ENCODE measurements at regions of chr19 and their contacts with region 1.

Region 1: GRCh38 chr19:13839130-13839937 is 37.6 kb upstream of the NANOS3 start:
- DNase-seq: peak; percentile 69
- ATAC-seq: peak; percentile 66
- H3K4me3 ChIP-seq: peak overlapping the region; percentile 92
- H3K27ac ChIP-seq: peak overlapping the region; percentile 96
- H3K4me1 ChIP-seq: peaks cover 55% of the 10 kb centered on the region
- H3K27me3 ChIP-seq: no peaks in the 10 kb centered on the region
- CTCF ChIP-seq: 0 out of 6 replicates have a peak, but pooled peaks of 1 of the 3 experiments have one; percentile 8
- EP300 ChIP-seq: 0 out of 4 replicates have a peak, but pooled peaks of 1 of the 2 experiments have one; percentile 11
- POLR2A ChIP-seq: peak; percentile 89
- RAD21 ChIP-seq: no peak; the same call in 1 of the 2 replicates

Region 2: GRCh38 chr19:13181747-13182388 is 657.5 kb before region 1 on chr19:
- CTCF ChIA-PET with region 1: no interaction called
- POLR2A ChIA-PET with region 1: no interaction called
- RAD21 ChIA-PET with region 1: no interaction called
- SMC1A ChIA-PET with region 1: no interaction called
- in situ Hi-C with region 1: no loop called
- intact Hi-C with region 1: no loop called
- DNase-seq: no peak
- ATAC-seq: peak; percentile 87
- H3K4me3 ChIP-seq: no peak overlapping the region
- H3K27ac ChIP-seq: peak overlapping the region; percentile 52
- H3K4me1 ChIP-seq: peaks cover 17% of the 10 kb centered on the region
- H3K27me3 ChIP-seq: no peaks in the 10 kb centered on the region
- CTCF ChIP-seq: no peak
- EP300 ChIP-seq: no peak; a peak in 1 of 4 replicates
- POLR2A ChIP-seq: no peak
- RAD21 ChIP-seq: no peak

Region 3: GRCh38 chr19:13784731-13785452 is 54.4 kb before region 1 on chr19:
- CTCF ChIA-PET with region 1: interaction called, 12 read pairs
- POLR2A ChIA-PET with region 1: interaction called, 10 read pairs
- RAD21 ChIA-PET with region 1: interaction called, 6 read pairs
- SMC1A ChIA-PET with region 1: interaction called, 3 read pairs
- in situ Hi-C with region 1: no loop called
- intact Hi-C with region 1: no loop called
- DNase-seq: no peak
- ATAC-seq: peak; percentile 91
- H3K4me3 ChIP-seq: no peak overlapping the region
- H3K27ac ChIP-seq: no peak overlapping the region
- H3K4me1 ChIP-seq: peaks cover 26% of the 10 kb centered on the region
- H3K27me3 ChIP-seq: no peaks in the 10 kb centered on the region
- CTCF ChIP-seq: peak; percentile 47 to 79 (median 74)
- EP300 ChIP-seq: no peak
- POLR2A ChIP-seq: no peak
- RAD21 ChIP-seq: peak; percentile 76

Region 4: GRCh38 chr19:13814550-13814949 is 24.8 kb before region 1 on chr19:
- CTCF ChIA-PET with region 1: no interaction called
- POLR2A ChIA-PET with region 1: no interaction called
- RAD21 ChIA-PET with region 1: no interaction called
- SMC1A ChIA-PET with region 1: no interaction called
- in situ Hi-C with region 1: no loop called
- intact Hi-C with region 1: no loop called
- DNase-seq: no peak
- ATAC-seq: no peak
- H3K4me3 ChIP-seq: no peak overlapping the region
- H3K27ac ChIP-seq: no peak overlapping the region
- H3K4me1 ChIP-seq: no peaks in the 10 kb centered on the region
- H3K27me3 ChIP-seq: no peaks in the 10 kb centered on the region
- CTCF ChIP-seq: no peak
- EP300 ChIP-seq: no peak
- POLR2A ChIP-seq: no peak
- RAD21 ChIP-seq: no peak

Region 5: DNA sequence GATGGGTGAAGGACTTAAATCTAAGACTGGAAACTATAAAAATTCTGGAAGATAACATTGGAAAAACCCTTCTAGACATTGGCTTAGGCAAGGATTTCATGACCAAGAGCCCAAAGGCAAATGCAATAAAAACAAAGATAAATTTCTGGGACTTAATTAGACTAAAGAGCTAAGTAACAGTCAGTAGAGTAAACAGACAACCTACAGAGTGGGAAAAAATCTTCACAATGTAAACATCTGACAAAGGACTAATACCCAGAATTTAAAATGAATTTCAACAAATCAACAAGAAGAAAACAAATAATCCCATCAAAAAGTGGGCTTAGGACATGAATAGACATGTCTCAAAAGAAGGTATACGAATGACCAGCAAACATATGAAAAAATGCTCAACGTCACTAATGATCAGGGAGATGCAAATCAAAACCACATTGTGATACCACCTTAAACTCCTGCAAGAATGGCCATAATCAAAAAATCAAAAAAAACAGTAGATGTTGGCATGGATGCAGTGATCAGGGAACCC is 173.1 kb after region 1 on chr19:
- CTCF ChIA-PET with region 1: no interaction called
- POLR2A ChIA-PET with region 1: no interaction called
- RAD21 ChIA-PET with region 1: no interaction called
- SMC1A ChIA-PET with region 1: no interaction called
- in situ Hi-C with region 1: no loop called
- intact Hi-C with region 1: no loop called
- DNase-seq: no peak
- ATAC-seq: no peak
- H3K4me3 ChIP-seq: no peak overlapping the region
- H3K27ac ChIP-seq: no peak overlapping the region
- H3K4me1 ChIP-seq: peaks cover 22% of the 10 kb centered on the region
- H3K27me3 ChIP-seq: no peaks in the 10 kb centered on the region
- CTCF ChIP-seq: no peak
- EP300 ChIP-seq: no peak
- POLR2A ChIP-seq: no peak
- RAD21 ChIP-seq: no peak

Measured in GM12878 (cell line).